ENCODE measurements at regions of chr11 and their contacts with region 1.

Region 1: GRCh38 chr11:1832211-1832919 is 2.4 kb upstream of the SYT8 start:
- DNase-seq: no peak
- ATAC-seq: peak; percentile 41
- H3K4me3 ChIP-seq: peak overlapping the region in 1 of 3 experiments; percentile 49; a peak in 1 of 6 replicates
- H3K27ac ChIP-seq: no peak overlapping the region
- H3K4me1 ChIP-seq: peaks cover 80% of the 10 kb centered on the region
- H3K27me3 ChIP-seq: peaks cover 0 to 6% of the 10 kb centered on the region in 2 experiments; a peak in 2 of 5 replicates
- CTCF ChIP-seq: peak; percentile 95
- EP300 ChIP-seq: no peak
- POLR2A ChIP-seq: no peak
- RAD21 ChIP-seq: peak; percentile 85

Region 2: DNA sequence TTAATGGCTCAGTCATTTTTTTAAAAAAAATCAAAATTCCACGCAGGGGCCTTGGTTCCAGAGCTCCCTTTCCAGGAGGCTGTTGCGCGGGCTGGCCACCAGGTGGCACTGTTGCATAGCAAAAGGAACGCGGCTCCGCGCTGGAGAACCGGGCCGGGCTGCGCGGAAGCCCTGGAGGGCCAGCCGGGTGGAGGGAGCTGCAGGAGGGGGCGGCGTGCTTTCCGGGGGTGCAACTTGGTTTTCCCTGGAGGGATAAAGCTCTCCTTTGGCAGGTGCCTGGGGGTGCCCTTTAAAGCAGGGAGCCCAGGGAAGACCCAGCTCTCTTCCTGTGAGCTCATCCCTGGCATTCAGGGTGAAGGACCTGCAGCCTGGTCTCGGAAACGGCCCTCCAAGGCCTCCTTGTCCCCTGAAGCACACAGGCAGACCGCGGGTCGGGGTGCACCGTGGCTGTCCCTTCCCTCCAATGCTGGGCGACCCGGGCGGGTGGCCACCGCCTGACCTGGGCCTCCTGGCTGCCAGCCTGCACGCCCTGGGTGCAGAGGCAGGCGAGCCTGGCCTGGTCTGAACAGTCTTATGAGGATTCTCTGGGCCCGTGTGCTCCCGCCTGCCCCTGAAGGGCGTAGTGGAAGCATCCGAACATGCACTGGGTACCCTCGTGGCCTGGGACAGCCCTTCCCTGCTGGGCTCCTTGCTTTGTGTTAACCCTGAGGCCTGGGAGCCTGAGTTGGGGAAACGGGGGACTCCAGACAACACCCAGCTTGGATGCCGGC is 179.4 kb before region 1 on chr11:
- CTCF ChIA-PET with region 1: interaction called, 37 read pairs
- POLR2A ChIA-PET with region 1: interaction called, 26 read pairs
- in situ Hi-C with region 1: loop called (anchors 5 kb)
- intact Hi-C with region 1: loop called (anchors 2 kb)
- DNase-seq: peak; percentile 35
- ATAC-seq: peak; percentile 85
- H3K4me3 ChIP-seq: no peak overlapping the region; a peak in 1 of 6 replicates
- H3K27ac ChIP-seq: peak overlapping the region; percentile 44
- H3K4me1 ChIP-seq: peaks cover 73% of the 10 kb centered on the region
- H3K27me3 ChIP-seq: peaks cover 0 to 7% of the 10 kb centered on the region in 2 experiments; a peak in 2 of 5 replicates
- CTCF ChIP-seq: peak; percentile 96
- EP300 ChIP-seq: no peak
- POLR2A ChIP-seq: no peak
- RAD21 ChIP-seq: peak; percentile 97

Region 3: DNA sequence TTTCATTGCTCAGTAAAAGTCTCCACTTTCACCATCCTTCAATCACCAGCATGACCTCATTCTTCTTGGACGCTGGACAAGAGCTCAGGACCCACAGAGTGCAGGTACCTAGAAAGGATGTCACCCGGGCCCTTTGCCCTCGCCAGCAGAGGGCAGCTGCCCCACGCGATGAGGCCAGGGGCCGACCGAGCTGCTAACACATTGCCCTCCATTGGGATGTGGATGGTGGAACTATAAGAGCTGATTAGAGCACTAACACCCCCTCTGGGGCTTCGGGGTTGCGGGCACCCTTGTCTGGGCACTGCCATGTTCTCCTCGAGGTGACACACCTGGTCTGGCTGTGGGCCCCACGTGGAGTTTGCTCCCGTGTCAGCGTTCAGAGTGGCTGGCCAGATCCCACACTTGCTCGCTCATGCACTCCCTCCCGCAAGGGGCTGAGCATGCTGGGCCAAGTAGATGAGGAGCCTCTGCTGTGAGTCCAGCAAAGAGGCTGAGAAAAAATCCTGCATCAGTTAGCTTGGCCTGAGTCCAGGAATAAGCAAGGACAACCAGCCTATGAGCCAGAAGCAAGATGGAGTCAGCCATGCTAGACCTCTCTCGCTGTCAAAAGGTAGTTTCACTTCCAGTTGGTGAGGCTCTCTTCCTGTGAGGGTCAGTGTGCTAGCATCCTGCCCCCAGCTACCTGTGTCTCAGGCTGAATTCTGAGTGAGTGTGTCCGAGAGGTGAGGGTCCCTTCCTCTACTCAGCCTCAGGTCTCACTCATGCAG is 125.5 kb before region 1 on chr11:
- CTCF ChIA-PET with region 1: no interaction called
- POLR2A ChIA-PET with region 1: no interaction called
- in situ Hi-C with region 1: no loop called
- intact Hi-C with region 1: loop called (anchors 5 kb)
- DNase-seq: no peak
- ATAC-seq: peak; percentile 65
- H3K4me3 ChIP-seq: no peak overlapping the region
- H3K27ac ChIP-seq: no peak overlapping the region
- H3K4me1 ChIP-seq: no peaks in the 10 kb centered on the region
- H3K27me3 ChIP-seq: peaks cover 5 to 24% of the 10 kb centered on the region in 2 experiments; a peak in 4 of 5 replicates
- CTCF ChIP-seq: peak; percentile 59
- EP300 ChIP-seq: no peak
- POLR2A ChIP-seq: no peak
- RAD21 ChIP-seq: no peak

Region 4: GRCh38 chr11:1763796-1764661 is 68.3 kb before region 1 on chr11 and contains the start of gene CTSD:
- CTCF ChIA-PET with region 1: no interaction called
- POLR2A ChIA-PET with region 1: interaction called, 3 read pairs
- in situ Hi-C with region 1: no loop called
- intact Hi-C with region 1: loop called (anchors 2 kb)
- DNase-seq: peak; percentile 65
- ATAC-seq: peak; percentile 68
- H3K4me3 ChIP-seq: peak within 1 kb of the TSS; percentile 84 to 93 (median 85)
- H3K27ac ChIP-seq: peak within 1 kb of the TSS; percentile 76
- H3K4me1 ChIP-seq: peaks cover 38% of the 10 kb centered on the region
- H3K27me3 ChIP-seq: peaks cover 3 to 22% of the 10 kb centered on the region in 2 experiments; a peak in 4 of 5 replicates
- CTCF ChIP-seq: peak; percentile 9; the same call in 1 of the 2 replicates
- EP300 ChIP-seq: no peak; a peak in 1 of 4 replicates
- POLR2A ChIP-seq: 0 out of 4 replicates have a peak, but pooled peaks of 1 of the 2 experiments have one; percentile 24
- RAD21 ChIP-seq: peak; percentile 24; the same call in 1 of the 2 replicates
- total RNA-seq, gene CTSD: 41.6 and 143 TPM in 2 replicates

Measured in HepG2 (cell line).